ENCODE measurements at regions of chr6 and their contacts with region 1.

Region 1: GRCh38 chr6:14210663-14211561 is 93.3 kb downstream of the CD83 start:
- DNase-seq: peak; percentile 94
- ATAC-seq: peak; percentile 91
- H3K4me3 ChIP-seq: peak overlapping the region; percentile 82
- H3K27ac ChIP-seq: peak overlapping the region; percentile 61
- H3K4me1 ChIP-seq: peaks cover 20% of the 10 kb centered on the region
- H3K27me3 ChIP-seq: no peaks in the 10 kb centered on the region
- CTCF ChIP-seq: peak; percentile 55

Region 2: DNA sequence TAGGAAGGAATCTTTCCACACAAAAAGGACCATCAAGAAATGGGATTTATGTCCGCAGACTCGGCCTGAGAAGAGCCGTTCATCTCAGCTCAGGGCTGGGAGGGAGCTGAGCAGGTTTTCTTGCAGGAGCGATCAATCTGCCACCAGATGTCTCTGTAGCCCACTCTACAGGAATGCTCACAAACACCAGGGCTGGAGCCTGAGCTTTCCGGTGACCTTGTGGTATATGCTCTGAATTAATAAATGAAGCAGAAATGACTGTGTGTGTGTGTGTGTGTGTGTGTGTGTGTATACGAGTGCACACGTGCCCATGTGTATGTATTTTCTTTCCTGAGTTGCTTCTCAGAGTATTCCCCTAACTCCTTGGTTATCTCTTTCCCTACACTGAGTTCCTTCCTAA is 81.3 kb before region 1 on chr6:
- CTCF ChIA-PET with region 1: interaction called, 13 read pairs
- POLR2A ChIA-PET with region 1: interaction called, 4 read pairs
- intact Hi-C with region 1: no loop called
- DNase-seq: peak; percentile 65
- ATAC-seq: peak; percentile 91
- H3K4me3 ChIP-seq: no peak overlapping the region
- H3K27ac ChIP-seq: no peak overlapping the region
- H3K4me1 ChIP-seq: peaks cover 11% of the 10 kb centered on the region
- H3K27me3 ChIP-seq: no peaks in the 10 kb centered on the region
- CTCF ChIP-seq: peak; percentile 66

Region 3: GRCh38 chr6:14321992-14322772 is 111.3 kb after region 1 on chr6:
- CTCF ChIA-PET with region 1: no interaction called
- POLR2A ChIA-PET with region 1: no interaction called
- intact Hi-C with region 1: loop called (anchors 5 kb)
- DNase-seq: peak; percentile 34
- ATAC-seq: peak; percentile 62; the same call in 1 of the 2 replicates
- H3K4me3 ChIP-seq: no peak overlapping the region
- H3K27ac ChIP-seq: no peak overlapping the region
- H3K4me1 ChIP-seq: peaks cover 6% of the 10 kb centered on the region; the same call in 1 of the 2 replicates
- H3K27me3 ChIP-seq: no peaks in the 10 kb centered on the region
- CTCF ChIP-seq: peak; percentile 43

Region 4: GRCh38 chr6:14584450-14584849 is 373.5 kb after region 1 on chr6:
- CTCF ChIA-PET with region 1: no interaction called
- POLR2A ChIA-PET with region 1: no interaction called
- intact Hi-C with region 1: loop called (anchors 1 kb)
- DNase-seq: peak; percentile 48
- ATAC-seq: peak; percentile 73
- H3K4me3 ChIP-seq: no peak overlapping the region
- H3K27ac ChIP-seq: no peak overlapping the region
- H3K4me1 ChIP-seq: no peaks in the 10 kb centered on the region
- H3K27me3 ChIP-seq: no peaks in the 10 kb centered on the region
- CTCF ChIP-seq: peak; percentile 48

Region 5: GRCh38 chr6:14889191-14889590 is 678.3 kb after region 1 on chr6:
- CTCF ChIA-PET with region 1: no interaction called
- POLR2A ChIA-PET with region 1: no interaction called
- intact Hi-C with region 1: loop called (anchors 5 kb)
- DNase-seq: peak; percentile 81
- ATAC-seq: peak; percentile 78
- H3K4me3 ChIP-seq: peak overlapping the region; percentile 3; the same call in 1 of the 2 replicates
- H3K27ac ChIP-seq: peak overlapping the region; percentile 83
- H3K4me1 ChIP-seq: peaks cover 14% of the 10 kb centered on the region
- H3K27me3 ChIP-seq: no peaks in the 10 kb centered on the region
- CTCF ChIP-seq: no peak

Region 6: GRCh38 chr6:15062516-15063252 is 851.8 kb after region 1 on chr6:
- CTCF ChIA-PET with region 1: no interaction called
- POLR2A ChIA-PET with region 1: no interaction called
- intact Hi-C with region 1: no loop called
- DNase-seq: peak; percentile 26
- ATAC-seq: no peak
- H3K4me3 ChIP-seq: no peak overlapping the region
- H3K27ac ChIP-seq: no peak overlapping the region
- H3K4me1 ChIP-seq: peaks cover 21% of the 10 kb centered on the region
- H3K27me3 ChIP-seq: no peaks in the 10 kb centered on the region
- CTCF ChIP-seq: no peak